Sigmoid colon (tissue), 7 donors: ENCODE measurements at regions of chr1 and their contacts with region 1.

Region 1: GRCh38 chr1:8374812-8375211 is 56.9 kb downstream of the SLC45A1 start:
- DNase-seq: no peak
- H3K4me3 ChIP-seq: no peak overlapping the region
- H3K27ac ChIP-seq: peak overlapping the region; percentile 88 to 97 (median 93)
- H3K4me1 ChIP-seq: peaks cover 0 to 97% (median 96%) of the 10 kb centered on the region in 4 donors
- H3K27me3 ChIP-seq: no peaks in the 10 kb centered on the region
- CTCF ChIP-seq: peak in 3 of 4 experiments; percentile 28 to 34 (median 31)
- EP300 ChIP-seq: no peak
- POLR2A ChIP-seq: no peak

Region 2: DNA sequence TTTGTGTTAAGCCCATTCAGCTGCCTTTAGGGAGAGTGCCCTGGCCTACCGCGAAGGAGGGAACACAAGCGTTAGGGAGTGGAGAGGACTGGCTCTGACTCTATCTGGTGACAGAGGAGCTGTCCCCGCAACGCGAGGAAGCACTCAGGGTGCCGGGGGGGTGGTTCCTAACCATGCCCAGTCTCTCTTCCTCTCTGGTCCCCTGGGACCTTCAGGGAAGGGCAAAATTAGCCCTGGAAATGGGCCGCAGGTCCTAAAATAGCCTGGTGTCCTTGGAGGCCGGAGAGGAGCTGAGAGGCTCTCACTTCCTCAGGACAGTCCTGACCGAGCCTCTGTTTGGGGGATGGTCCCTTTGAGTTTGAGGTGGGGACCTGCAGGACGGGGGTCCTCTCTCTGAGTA is 51.1 kb before region 1 on chr1:
- intact Hi-C with region 1: no loop called
- DNase-seq: no peak
- H3K4me3 ChIP-seq: no peak overlapping the region
- H3K27ac ChIP-seq: no peak overlapping the region
- H3K4me1 ChIP-seq: peaks cover 0 to 4% (median 1%) of the 10 kb centered on the region in 4 donors
- H3K27me3 ChIP-seq: no peaks in the 10 kb centered on the region
- CTCF ChIP-seq: no peak
- EP300 ChIP-seq: no peak
- POLR2A ChIP-seq: no peak

Region 3: DNA sequence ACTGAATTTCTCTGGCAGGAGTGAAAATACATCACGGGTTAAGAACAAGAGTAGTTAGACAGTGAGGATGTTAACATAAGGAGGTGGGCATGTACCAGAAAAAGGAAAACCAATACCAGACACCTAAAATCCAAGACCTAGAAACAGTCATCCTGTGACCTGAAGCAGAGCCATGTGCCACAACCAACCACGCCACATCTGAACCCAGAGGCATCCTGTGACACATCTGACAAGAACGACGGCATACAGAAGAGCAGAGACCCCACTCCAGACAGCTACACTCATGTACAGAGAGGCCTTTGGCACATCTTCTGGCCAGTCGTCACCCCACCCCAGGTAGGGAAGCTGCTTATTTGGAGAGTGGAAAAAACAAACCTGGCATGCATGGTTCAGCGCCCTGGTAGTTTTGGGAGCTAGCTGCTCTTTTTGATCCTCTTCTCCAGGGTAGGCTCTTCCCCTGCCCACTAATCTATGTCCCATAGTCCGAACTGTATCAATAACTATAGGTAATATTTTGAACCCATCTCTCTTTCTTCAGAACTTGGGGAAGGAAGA is 15.2 kb after region 1 on chr1:
- intact Hi-C with region 1: no loop called
- DNase-seq: no peak
- H3K4me3 ChIP-seq: no peak overlapping the region
- H3K27ac ChIP-seq: peak overlapping the region in 2 of 4 donors; percentile 11 to 19
- H3K4me1 ChIP-seq: peaks cover 0 to 82% (median 70%) of the 10 kb centered on the region in 4 donors
- H3K27me3 ChIP-seq: no peaks in the 10 kb centered on the region
- CTCF ChIP-seq: no peak
- EP300 ChIP-seq: no peak
- POLR2A ChIP-seq: no peak

Region 4: GRCh38 chr1:8407652-8408051 is 32.8 kb after region 1 on chr1:
- intact Hi-C with region 1: loop called (anchors 1 kb)
- DNase-seq: no peak
- H3K4me3 ChIP-seq: no peak overlapping the region
- H3K27ac ChIP-seq: peak overlapping the region; percentile 82 to 100 (median 98)
- H3K4me1 ChIP-seq: peaks cover 0 to 92% (median 73%) of the 10 kb centered on the region in 4 donors
- H3K27me3 ChIP-seq: no peaks in the 10 kb centered on the region
- CTCF ChIP-seq: no peak
- EP300 ChIP-seq: no peak
- POLR2A ChIP-seq: no peak

Region 5: DNA sequence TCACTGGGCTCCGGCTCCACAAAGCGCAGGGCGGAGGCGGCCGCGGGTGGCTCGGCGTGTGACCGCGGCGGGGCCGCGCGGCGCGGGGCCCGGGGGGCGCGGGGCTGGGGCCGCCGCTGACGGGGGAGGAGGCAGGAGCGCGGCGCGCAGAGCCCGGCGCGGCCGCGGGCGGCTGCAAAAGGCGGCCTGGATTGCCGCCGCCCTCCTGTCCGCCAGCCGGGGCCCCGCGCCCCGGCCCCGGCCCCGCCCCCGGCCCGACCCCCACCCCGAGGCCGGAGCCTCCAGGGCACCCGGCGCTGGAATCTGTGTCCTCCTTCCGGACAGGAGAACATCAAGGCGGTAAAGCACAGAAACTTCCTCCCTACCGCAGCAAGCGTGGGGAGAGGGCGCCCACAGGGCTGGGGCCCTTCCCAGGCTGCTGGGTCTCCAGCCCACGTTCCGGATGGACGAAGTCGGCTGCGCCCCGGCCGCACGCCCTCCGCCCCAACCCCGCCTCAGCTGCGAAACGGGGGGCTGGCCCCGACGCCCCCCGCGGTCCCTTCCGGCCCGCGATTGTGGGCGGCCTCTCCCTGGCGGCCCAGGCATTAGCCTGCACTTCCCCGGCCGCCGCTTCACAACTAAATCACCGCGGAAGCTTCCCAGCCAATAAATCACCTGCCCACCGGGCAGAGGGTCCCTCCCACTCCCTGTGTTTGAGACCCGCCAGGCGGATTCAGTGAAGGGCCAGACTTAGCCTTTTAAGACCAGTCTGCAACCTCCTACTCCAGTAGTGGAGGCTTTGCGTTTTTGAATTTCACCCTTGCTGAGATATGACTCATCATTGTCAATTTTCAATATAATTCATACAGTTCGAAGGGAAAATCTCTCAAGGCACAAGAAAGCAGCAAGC is 49.1 kb after region 1 on chr1:
- intact Hi-C with region 1: loop called (anchors 5 kb)
- DNase-seq: peak; percentile 74
- H3K4me3 ChIP-seq: peak overlapping the region; percentile 75 to 99 (median 94)
- H3K27ac ChIP-seq: peak overlapping the region; percentile 96 to 100 (median 98)
- H3K4me1 ChIP-seq: peaks cover 0 to 57% (median 44%) of the 10 kb centered on the region in 4 donors
- H3K27me3 ChIP-seq: no peaks in the 10 kb centered on the region
- CTCF ChIP-seq: peak in 1 of 4 experiments; percentile 26
- EP300 ChIP-seq: no peak
- POLR2A ChIP-seq: peak; percentile 15 to 20